Activated CD4-positive, alpha-beta T cell treated with anti-CD3 and anti-CD28 coated beads for 36 hours (primary cell): ENCODE measurements at regions of chr2 and their contacts with region 1.

Region 1: DNA sequence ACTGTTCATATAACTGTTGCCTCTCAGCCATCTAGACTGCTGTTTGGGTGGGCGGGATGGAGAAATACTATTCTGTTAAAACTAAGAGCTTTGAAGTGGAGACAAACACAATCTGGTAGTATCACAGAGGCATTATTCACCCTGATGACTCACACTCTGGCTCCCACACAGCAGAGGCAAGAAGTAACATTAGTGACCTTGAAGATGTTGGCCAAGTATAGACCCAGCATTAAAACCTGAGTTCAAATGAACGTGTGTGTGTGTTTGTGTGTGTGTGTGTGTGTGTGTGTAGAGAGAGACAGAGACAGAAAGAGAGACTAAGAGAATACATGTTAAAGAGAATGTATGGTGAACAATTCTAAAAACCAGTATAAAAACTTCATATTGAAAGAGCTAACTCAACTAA is 22.5 kb upstream of the ACVR1 start:
- DNase-seq: peak; percentile 86
- ATAC-seq: peak; percentile 73
- H3K4me3 Mint-ChIP-seq: peak overlapping the region; percentile 69
- H3K27ac Mint-ChIP-seq: peak overlapping the region; percentile 100
- H3K4me1 Mint-ChIP-seq: peaks cover 83% of the 10 kb centered on the region
- H3K27me3 Mint-ChIP-seq: no peaks in the 10 kb centered on the region

Region 2: GRCh38 chr2:156332534-156333273 is 1565.9 kb before region 1 on chr2 and contains the start of gene NR4A2:
- CTCF ChIA-PET with region 1: no interaction called
- POLR2A ChIA-PET with region 1: no interaction called
- intact Hi-C with region 1: loop called in 1 of 2 experiments (anchors 5 kb)
- DNase-seq: peak; percentile 95
- ATAC-seq: peak; percentile 63
- H3K4me3 Mint-ChIP-seq: peak within 1 kb of the TSS; percentile 85
- H3K27ac Mint-ChIP-seq: peak within 1 kb of the TSS; percentile 94
- H3K4me1 Mint-ChIP-seq: peaks cover 46% of the 10 kb centered on the region
- H3K27me3 Mint-ChIP-seq: peaks cover 8% of the 10 kb centered on the region
- total RNA-seq, gene NR4A2: 19.1 to 23.0 TPM

Region 3: GRCh38 chr2:157312866-157313486 is 585.6 kb before region 1 on chr2:
- CTCF ChIA-PET with region 1: no interaction called
- POLR2A ChIA-PET with region 1: no interaction called
- intact Hi-C with region 1: loop called (anchors 2 to 10 kb)
- DNase-seq: no peak
- ATAC-seq: peak; percentile 84
- H3K4me3 Mint-ChIP-seq: no peak overlapping the region
- H3K27ac Mint-ChIP-seq: no peak overlapping the region
- H3K4me1 Mint-ChIP-seq: peaks cover 49% of the 10 kb centered on the region
- H3K27me3 Mint-ChIP-seq: no peaks in the 10 kb centered on the region

Region 4: GRCh38 chr2:157443795-157444640 is 454.6 kb before region 1 on chr2 and contains the start of gene CYTIP:
- CTCF ChIA-PET with region 1: interaction called, 3 read pairs
- POLR2A ChIA-PET with region 1: interaction called, 17 read pairs
- intact Hi-C with region 1: loop called in 1 of 2 experiments (anchors 2 kb)
- DNase-seq: peak; percentile 82
- ATAC-seq: peak; percentile 44
- H3K4me3 Mint-ChIP-seq: peak within 1 kb of the TSS; percentile 93
- H3K27ac Mint-ChIP-seq: peak within 1 kb of the TSS; percentile 95
- H3K4me1 Mint-ChIP-seq: peaks cover 40% of the 10 kb centered on the region
- H3K27me3 Mint-ChIP-seq: no peaks in the 10 kb centered on the region
- total RNA-seq, gene CYTIP: 470 to 536 TPM

Region 5: DNA sequence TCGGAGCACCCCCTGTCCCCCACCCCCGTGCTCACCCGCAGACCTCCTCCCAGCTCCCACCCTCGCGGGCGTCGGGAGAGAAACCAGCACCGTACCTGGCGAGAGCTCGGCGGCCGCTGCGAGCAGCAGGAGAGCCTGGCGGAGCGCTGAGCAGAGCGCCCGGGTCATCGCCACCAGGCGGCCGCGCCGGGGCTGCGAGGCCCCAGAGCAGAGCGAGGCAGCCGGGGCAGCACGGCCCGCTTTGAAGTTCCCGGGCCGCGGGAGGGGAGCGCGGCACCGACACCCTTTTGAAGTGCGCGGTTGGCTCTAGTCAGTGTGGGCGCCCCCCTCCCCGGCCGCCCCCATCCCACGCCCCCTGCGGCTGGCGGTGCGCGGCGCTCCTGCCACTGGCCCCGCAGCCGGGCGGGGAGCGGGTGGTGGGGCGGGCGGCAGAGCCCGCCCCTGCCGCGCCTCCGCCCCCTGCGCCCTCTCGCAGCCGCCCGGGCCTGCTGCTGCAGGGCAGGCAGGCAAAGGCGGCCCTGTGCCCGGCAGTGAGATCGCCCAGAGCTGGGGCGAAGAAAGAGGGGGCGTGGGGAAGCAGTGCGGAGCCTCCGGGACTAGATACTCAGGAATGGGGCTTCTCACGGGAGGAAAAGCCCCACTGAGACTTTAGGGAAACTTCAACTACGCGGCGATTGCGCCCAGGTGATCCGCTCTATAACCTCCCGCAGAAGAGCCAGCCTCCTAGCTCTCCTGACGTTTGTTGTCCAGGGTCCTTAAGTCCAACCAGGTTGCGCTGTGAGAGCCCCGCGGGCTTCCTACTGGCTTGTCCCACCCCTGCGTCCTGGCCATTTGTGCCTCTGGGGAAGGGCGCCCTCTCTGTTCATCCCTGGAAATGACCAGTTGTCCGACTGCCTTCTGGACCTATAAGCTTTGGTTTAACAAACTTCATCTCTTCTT is 269.8 kb before region 1 on chr2 and contains the start of gene ACVR1C:
- CTCF ChIA-PET with region 1: interaction called, 3 read pairs
- POLR2A ChIA-PET with region 1: no interaction called
- intact Hi-C with region 1: loop called (anchors 5 kb)
- DNase-seq: peak; percentile 80
- ATAC-seq: peak; percentile 82
- H3K4me3 Mint-ChIP-seq: peak within 1 kb of the TSS; percentile 76
- H3K27ac Mint-ChIP-seq: peak within 1 kb of the TSS; percentile 23
- H3K4me1 Mint-ChIP-seq: peaks cover 34% of the 10 kb centered on the region
- H3K27me3 Mint-ChIP-seq: peaks cover 5% of the 10 kb centered on the region
- total RNA-seq, gene ACVR1C: 1.6 to 1.7 TPM

Region 6: DNA sequence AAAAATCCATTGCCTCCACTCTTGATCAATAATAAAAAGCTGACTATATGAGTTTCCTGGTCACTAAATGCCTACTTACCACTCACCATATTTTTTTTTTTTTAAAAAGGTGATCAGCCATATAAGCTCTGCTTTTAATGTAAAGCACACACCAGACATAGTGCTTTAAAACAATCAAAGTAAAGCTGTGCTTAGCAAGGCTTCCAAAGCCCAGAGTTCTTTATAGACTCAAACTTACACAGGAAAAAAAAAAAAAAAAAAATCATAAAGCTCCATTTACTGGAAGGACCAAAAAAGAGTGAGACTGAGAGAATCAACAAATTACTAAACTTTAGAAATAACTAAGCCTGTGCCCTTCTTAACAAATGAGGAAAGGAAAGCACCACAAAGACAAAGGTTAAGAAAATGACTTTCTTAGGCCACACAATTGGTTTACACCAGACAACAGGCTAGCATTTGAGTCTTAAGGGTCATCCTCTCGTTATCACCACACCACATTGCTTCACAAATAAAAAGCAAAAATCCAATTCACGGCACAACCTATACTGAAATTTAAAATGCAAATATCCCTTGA is 33.6 kb before region 1 on chr2:
- CTCF ChIA-PET with region 1: interaction called, 10 read pairs
- POLR2A ChIA-PET with region 1: interaction called, 9 read pairs
- intact Hi-C with region 1: loop called (anchors 1 kb)
- DNase-seq: no peak
- ATAC-seq: peak; percentile 83
- H3K4me3 Mint-ChIP-seq: peak overlapping the region; percentile 33
- H3K27ac Mint-ChIP-seq: peak overlapping the region; percentile 83
- H3K4me1 Mint-ChIP-seq: peaks cover 43% of the 10 kb centered on the region
- H3K27me3 Mint-ChIP-seq: no peaks in the 10 kb centered on the region

Region 7: DNA sequence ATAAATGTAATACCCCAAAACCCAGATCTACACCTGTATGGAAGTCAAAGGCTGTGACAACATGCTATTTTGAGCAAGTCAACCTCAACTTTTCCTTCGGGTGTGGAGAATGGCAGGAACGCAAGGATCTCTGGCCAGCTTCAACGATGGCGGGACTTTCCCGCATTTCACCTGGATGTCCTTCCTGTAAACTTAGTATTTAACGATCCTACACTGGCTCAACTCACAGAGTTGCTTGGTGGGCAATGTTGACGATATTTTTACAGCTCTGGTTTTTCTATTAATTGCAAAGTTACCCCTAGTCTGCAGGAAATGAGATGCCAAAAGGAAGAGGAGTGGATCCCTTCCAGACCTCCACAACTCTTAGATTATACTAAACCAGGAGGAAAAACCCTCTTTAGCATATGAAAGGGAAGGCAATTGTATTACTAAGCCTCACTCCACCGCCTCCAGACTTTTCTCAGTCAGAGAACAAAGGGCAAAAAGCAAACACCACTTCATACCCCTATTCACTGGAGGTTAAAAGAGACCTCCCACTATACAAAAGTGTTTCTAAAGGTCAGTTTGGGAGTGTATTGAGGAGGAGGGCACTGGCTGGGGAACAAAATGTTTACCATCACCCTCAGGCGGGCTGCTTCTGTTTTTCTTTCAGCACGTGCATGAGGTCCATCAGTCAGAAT is 34.0 kb after region 1 on chr2:
- CTCF ChIA-PET with region 1: no interaction called
- POLR2A ChIA-PET with region 1: no interaction called
- intact Hi-C with region 1: no loop called
- DNase-seq: no peak
- ATAC-seq: no peak
- H3K4me3 Mint-ChIP-seq: no peak overlapping the region
- H3K27ac Mint-ChIP-seq: no peak overlapping the region
- H3K4me1 Mint-ChIP-seq: peaks cover 12% of the 10 kb centered on the region
- H3K27me3 Mint-ChIP-seq: no peaks in the 10 kb centered on the region

Region 8: GRCh38 chr2:158456309-158457066 is 557.9 kb after region 1 on chr2 and contains the starts of genes CCDC148 and PKP4:
- CTCF ChIA-PET with region 1: no interaction called
- POLR2A ChIA-PET with region 1: no interaction called
- intact Hi-C with region 1: loop called in 1 of 2 experiments (anchors 1 kb)
- DNase-seq: peak; percentile 95
- ATAC-seq: peak; percentile 97
- H3K4me3 Mint-ChIP-seq: peak within 1 kb of the TSS; percentile 92
- H3K27ac Mint-ChIP-seq: peak within 1 kb of the TSS; percentile 72
- H3K4me1 Mint-ChIP-seq: peaks cover 25% of the 10 kb centered on the region
- H3K27me3 Mint-ChIP-seq: peaks cover 5% of the 10 kb centered on the region
- total RNA-seq, gene CCDC148: 0.23 to 0.26 TPM
- total RNA-seq, gene PKP4: 39.2 to 58.4 TPM